Activated naive CD4-positive, alpha-beta T cell treated with anti-CD3 and anti-CD28 coated beads for 36 hours (primary cell): ENCODE measurements at regions of chr2 and their contacts with region 1.

Region 1: DNA sequence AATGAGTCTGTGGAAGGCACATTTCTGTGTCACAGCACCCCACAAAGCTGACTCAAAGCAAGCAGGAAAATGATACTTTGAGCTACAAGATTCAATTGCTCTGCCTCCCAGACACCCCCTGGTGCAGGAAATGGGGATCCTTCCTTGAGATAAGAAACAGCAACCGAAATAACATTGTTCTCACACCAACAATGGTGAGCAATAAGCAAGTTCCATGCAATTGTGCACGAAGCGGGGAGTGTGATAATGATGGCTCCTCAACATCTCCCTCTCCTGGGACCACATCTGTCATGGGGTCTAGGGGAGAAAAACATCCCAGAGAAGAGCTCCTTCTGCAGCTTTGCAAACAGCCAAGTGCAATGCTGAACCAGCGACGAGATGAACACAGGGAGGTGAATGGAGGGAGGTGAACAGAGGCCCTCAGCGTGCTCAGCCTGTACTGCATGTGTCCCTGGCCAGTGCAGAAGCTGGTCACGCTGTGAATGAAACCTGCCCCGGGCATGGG is 67.7 kb downstream of the PDCL3 start:
- DNase-seq: peak; percentile 64
- H3K4me3 Mint-ChIP-seq: no peak overlapping the region
- H3K27ac Mint-ChIP-seq: no peak overlapping the region
- H3K4me1 Mint-ChIP-seq: peaks cover 22% of the 10 kb centered on the region
- H3K27me3 Mint-ChIP-seq: no peaks in the 10 kb centered on the region

Region 2: DNA sequence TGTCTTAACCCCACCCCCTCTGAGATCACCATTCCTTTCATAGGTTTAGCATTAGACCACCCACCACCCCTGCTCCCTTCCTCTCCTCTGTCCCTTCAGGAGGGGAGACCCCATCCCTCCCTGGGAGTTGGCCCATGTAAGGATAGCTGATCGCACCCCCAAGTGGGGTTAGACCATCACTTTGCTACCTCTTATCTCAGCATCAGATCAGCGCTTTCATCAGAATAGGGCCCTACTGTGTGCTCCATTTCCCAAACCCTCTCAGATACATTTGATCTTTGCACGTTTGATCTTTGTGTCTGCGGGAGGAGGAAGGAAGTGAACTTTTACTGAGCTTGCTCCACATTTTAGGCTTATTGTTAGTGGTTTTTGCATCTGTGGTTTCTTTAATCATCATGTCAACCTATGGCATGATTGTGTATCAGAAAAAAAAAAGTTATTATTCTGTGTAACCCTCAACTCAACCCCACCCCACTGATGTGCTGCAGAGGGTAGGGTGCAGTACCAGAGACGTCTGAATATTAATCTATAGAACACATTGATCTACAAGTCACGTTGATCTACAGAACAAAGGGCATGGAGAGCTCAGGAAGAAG is 13.5 kb after region 1 on chr2:
- CTCF ChIA-PET with region 1: interaction called, 4 read pairs
- intact Hi-C with region 1: loop called (anchors 2 kb)
- DNase-seq: peak; percentile 44
- H3K4me3 Mint-ChIP-seq: peak overlapping the region; percentile 50
- H3K27ac Mint-ChIP-seq: peak overlapping the region; percentile 73
- H3K4me1 Mint-ChIP-seq: peaks cover 49% of the 10 kb centered on the region
- H3K27me3 Mint-ChIP-seq: no peaks in the 10 kb centered on the region

Region 3: GRCh38 chr2:100655936-100656534 is 25.5 kb after region 1 on chr2:
- CTCF ChIA-PET with region 1: no interaction called
- intact Hi-C with region 1: no loop called
- DNase-seq: no peak
- H3K4me3 Mint-ChIP-seq: no peak overlapping the region
- H3K27ac Mint-ChIP-seq: no peak overlapping the region
- H3K4me1 Mint-ChIP-seq: peaks cover 43% of the 10 kb centered on the region
- H3K27me3 Mint-ChIP-seq: no peaks in the 10 kb centered on the region